ENCODE measurements at regions of chr2 and their contacts with region 1.

Region 1: DNA sequence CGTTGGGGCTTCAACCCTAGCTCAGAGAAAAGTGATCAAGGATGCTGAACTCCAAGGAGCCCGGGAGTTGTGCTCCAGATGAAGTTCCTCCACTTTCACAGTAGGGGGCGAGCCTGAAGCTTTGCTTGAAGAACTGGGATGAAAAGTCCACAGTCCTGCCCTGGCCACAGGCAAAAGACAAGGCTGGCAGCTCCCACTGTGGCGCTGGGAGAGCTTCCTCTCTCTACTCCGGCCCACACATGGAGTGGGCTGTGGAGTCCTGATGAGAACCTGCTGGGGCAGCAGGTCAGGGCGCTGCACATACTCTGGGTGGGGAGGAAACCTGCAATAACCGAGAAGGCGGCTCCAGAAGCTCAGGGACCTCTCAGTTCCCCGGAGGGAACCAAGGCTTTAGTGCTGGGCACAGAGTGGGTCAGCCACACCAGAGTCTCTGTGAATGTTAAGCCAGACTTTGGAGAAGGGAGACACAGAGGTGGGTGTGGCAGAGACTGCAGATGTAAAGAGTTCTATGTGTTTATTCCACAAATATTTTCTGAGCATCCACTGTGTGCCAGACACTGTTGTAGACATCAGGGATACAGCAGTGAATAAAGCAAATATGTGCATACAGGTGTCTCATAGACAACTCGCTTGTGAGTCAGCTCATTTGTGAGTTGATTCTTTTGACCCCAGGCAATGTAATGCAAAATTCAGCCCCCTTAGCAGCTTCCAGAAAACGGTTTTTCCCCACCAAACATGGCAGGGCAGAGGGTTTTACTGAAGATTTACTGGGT is 48.0 kb upstream of the MRPL33 start:
- DNase-seq: peak; percentile 29
- ATAC-seq: peak; percentile 51
- H3K4me3 ChIP-seq: no peak overlapping the region
- H3K4me3 Mint-ChIP-seq: no peak overlapping the region
- H3K27ac ChIP-seq: no peak overlapping the region
- H3K27ac Mint-ChIP-seq: no peak overlapping the region
- H3K4me1 ChIP-seq: no peaks in the 10 kb centered on the region
- H3K4me1 Mint-ChIP-seq: no peaks in the 10 kb centered on the region
- H3K27me3 ChIP-seq: peaks cover 0 to 6% (median 1%) of the 10 kb centered on the region in 4 experiments
- H3K27me3 Mint-ChIP-seq: peaks cover 8% of the 10 kb centered on the region
- CTCF ChIP-seq: peak; percentile 64

Region 2: GRCh38 chr2:27681841-27682240 is 41.7 kb before region 1 on chr2:
- CTCF ChIA-PET with region 1: no interaction called
- POLR2A ChIA-PET with region 1: no interaction called
- intact Hi-C with region 1: no loop called
- DNase-seq: no peak
- ATAC-seq: no peak
- H3K4me3 ChIP-seq: no peak overlapping the region
- H3K4me3 Mint-ChIP-seq: no peak overlapping the region
- H3K27ac ChIP-seq: no peak overlapping the region
- H3K27ac Mint-ChIP-seq: no peak overlapping the region
- H3K4me1 ChIP-seq: no peaks in the 10 kb centered on the region
- H3K4me1 Mint-ChIP-seq: peaks cover 5% of the 10 kb centered on the region
- H3K27me3 ChIP-seq: no peaks in the 10 kb centered on the region
- H3K27me3 Mint-ChIP-seq: no peaks in the 10 kb centered on the region
- CTCF ChIP-seq: no peak

Region 3: GRCh38 chr2:27710640-27711430 is 12.7 kb before region 1 on chr2:
- CTCF ChIA-PET with region 1: interaction called, 12 read pairs
- POLR2A ChIA-PET with region 1: no interaction called
- intact Hi-C with region 1: no loop called
- DNase-seq: no peak
- ATAC-seq: no peak
- H3K4me3 ChIP-seq: no peak overlapping the region
- H3K4me3 Mint-ChIP-seq: no peak overlapping the region
- H3K27ac ChIP-seq: no peak overlapping the region
- H3K27ac Mint-ChIP-seq: no peak overlapping the region
- H3K4me1 ChIP-seq: peaks cover 4 to 5% of the 10 kb centered on the region in 2 donors
- H3K4me1 Mint-ChIP-seq: peaks cover 7% of the 10 kb centered on the region
- H3K27me3 ChIP-seq: peaks cover 0 to 9% (median 0%) of the 10 kb centered on the region in 4 experiments
- H3K27me3 Mint-ChIP-seq: peaks cover 31% of the 10 kb centered on the region
- CTCF ChIP-seq: no peak

Region 4: DNA sequence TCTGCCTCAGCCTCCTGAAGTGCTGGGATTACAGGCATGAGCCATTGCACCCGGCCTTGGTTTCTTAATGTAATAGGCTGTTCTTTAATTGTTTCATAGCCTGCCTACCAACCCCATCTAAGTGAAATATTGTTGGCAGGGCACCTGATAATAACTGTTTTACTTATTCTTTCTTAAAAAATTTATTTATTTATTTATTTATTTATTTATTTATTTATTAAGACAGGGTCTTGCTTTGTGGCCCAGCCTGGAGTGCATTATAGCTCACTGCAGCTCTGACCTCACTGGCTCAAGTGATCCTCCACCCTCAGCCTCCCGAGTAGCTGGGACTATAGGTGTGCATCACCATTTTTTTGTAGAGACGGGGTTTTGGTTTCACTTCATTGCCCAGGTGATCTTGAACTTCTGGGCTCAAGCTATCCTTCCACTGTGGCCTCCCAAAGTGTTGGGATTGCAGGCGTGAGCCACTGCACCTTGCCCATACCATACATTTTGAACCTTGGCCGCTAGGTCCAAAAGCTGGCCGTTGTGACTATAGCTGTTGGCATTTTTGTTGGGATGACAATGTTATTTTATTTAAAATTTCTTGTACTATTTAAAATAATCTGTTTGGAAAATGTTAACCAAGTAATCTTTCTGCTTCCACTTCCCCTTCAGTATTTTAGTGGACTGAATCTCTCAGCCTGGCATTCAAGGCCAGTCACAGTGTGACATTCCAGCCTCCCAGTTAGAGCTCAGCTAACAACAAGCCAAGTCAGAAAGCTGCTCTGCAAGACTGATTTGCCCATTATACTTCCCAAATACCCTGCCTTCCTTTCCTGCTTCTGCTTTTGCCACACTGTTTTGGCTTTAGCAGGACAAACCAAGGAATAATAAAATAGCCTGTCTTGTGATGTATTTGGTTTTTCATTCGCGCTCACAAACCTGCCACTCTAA is 219.3 kb after region 1 on chr2:
- CTCF ChIA-PET with region 1: no interaction called
- POLR2A ChIA-PET with region 1: no interaction called
- intact Hi-C with region 1: no loop called
- DNase-seq: no peak
- ATAC-seq: no peak
- H3K4me3 ChIP-seq: no peak overlapping the region
- H3K4me3 Mint-ChIP-seq: no peak overlapping the region
- H3K27ac ChIP-seq: no peak overlapping the region
- H3K27ac Mint-ChIP-seq: no peak overlapping the region
- H3K4me1 ChIP-seq: peaks cover 0 to 4% of the 10 kb centered on the region in 2 donors
- H3K4me1 Mint-ChIP-seq: peaks cover 8% of the 10 kb centered on the region
- H3K27me3 ChIP-seq: no peaks in the 10 kb centered on the region
- H3K27me3 Mint-ChIP-seq: no peaks in the 10 kb centered on the region
- CTCF ChIP-seq: no peak

Measured in B cell (primary cell).